T-cell (primary cell): ENCODE measurements at regions of chrX and their contacts with region 1.

Region 1: GRCh38 chrX:132776486-132777210 is 181.8 kb downstream of the HS6ST2 start:
- DNase-seq: no peak
- ATAC-seq: no peak
- H3K4me3 ChIP-seq: no peak overlapping the region
- H3K4me3 Mint-ChIP-seq: no peak overlapping the region
- H3K27ac ChIP-seq: no peak overlapping the region
- H3K27ac Mint-ChIP-seq: no peak overlapping the region
- H3K4me1 ChIP-seq: no peaks in the 10 kb centered on the region
- H3K4me1 Mint-ChIP-seq: peaks cover 0 to 2% (median 0%) of the 10 kb centered on the region in 3 donors
- H3K27me3 ChIP-seq: no peaks in the 10 kb centered on the region
- H3K27me3 Mint-ChIP-seq: peaks cover 0 to 7% of the 10 kb centered on the region in 2 donors

Region 2: DNA sequence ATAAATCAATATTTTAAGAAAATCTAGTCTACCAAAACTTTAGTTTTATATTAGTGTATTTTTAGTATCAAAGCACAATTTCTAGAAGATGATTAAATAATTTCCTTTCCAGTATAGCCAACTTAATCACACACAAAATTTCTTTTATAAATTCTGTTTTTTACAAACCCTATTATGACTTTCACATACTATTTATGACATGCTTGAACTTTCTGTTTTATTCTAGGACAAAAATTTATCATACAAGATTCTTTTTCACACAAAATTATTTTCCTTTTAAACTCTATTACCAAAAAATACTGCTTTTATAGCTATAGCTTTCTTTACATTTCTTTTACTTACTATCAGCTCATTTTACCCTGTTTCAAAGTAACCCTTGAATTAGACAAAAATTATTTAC is 1083.3 kb before region 1 on chrX:
- CTCF ChIA-PET with region 1: no interaction called
- POLR2A ChIA-PET with region 1: interaction called in 1 of 2 experiments, 10 read pairs
- DNase-seq: no peak
- ATAC-seq: no peak
- H3K4me3 ChIP-seq: no peak overlapping the region
- H3K4me3 Mint-ChIP-seq: no peak overlapping the region
- H3K27ac ChIP-seq: no peak overlapping the region
- H3K27ac Mint-ChIP-seq: no peak overlapping the region
- H3K4me1 ChIP-seq: no peaks in the 10 kb centered on the region
- H3K4me1 Mint-ChIP-seq: no peaks in the 10 kb centered on the region
- H3K27me3 ChIP-seq: no peaks in the 10 kb centered on the region
- H3K27me3 Mint-ChIP-seq: peaks cover 0 to 27% of the 10 kb centered on the region in 2 donors

Region 3: DNA sequence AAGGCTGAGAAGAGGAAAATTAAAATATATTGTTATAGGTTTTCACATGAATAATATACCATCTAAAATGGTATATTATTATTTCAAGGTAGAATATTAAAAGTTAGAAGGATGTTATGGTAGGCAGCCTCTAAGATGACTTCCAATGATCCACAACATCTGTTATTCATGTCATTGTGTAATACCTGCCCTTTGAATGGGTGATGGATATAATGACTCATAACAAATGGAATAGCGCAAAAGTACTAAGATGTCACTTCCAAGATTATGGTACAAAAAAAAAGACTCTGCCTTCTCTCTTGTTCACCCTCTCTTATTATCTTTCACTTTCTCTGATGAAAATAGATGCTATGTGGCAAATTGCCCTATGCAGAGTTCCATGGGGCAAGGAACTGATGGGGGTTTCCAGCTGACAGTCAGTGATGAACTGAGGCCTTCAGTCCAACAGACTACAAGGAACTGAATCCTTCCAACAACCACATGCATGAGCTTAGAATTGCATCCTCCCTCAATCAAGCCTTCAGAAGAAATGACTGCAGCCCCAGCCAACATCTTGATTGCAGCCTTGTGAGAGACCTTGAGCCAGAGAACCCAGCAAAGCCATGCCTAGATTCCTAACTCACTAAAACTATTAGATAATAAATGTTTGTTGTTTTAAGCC is 124.1 kb after region 1 on chrX:
- CTCF ChIA-PET with region 1: no interaction called
- POLR2A ChIA-PET with region 1: no interaction called
- DNase-seq: no peak
- ATAC-seq: no peak
- H3K4me3 ChIP-seq: no peak overlapping the region
- H3K4me3 Mint-ChIP-seq: no peak overlapping the region
- H3K27ac ChIP-seq: no peak overlapping the region
- H3K27ac Mint-ChIP-seq: no peak overlapping the region
- H3K4me1 ChIP-seq: no peaks in the 10 kb centered on the region
- H3K4me1 Mint-ChIP-seq: no peaks in the 10 kb centered on the region
- H3K27me3 ChIP-seq: no peaks in the 10 kb centered on the region
- H3K27me3 Mint-ChIP-seq: peaks cover 0 to 24% of the 10 kb centered on the region in 2 donors